ENCODE measurements at regions of chr16 and their contacts with region 1.

Region 1: GRCh38 chr16:970766-971581 is at the start of gene LMF1:
- DNase-seq: peak; percentile 100
- ATAC-seq: peak; percentile 99
- H3K4me3 Mint-ChIP-seq: peak within 1 kb of the TSS; percentile 85
- H3K27ac Mint-ChIP-seq: peak within 1 kb of the TSS; percentile 65
- H3K4me1 Mint-ChIP-seq: peaks cover 19% of the 10 kb centered on the region
- H3K27me3 Mint-ChIP-seq: peaks cover 8% of the 10 kb centered on the region
- CTCF ChIP-seq: no peak
- total RNA-seq, gene LMF1: 30.7 and 36.1 TPM in 2 replicates

Region 2: GRCh38 chr16:720990-721764 is 249.8 kb before region 1 on chr16 and contains the start of gene ANTKMT:
- CTCF ChIA-PET with region 1: no interaction called
- POLR2A ChIA-PET with region 1: no interaction called
- intact Hi-C with region 1: loop called (anchors 5 kb)
- DNase-seq: peak; percentile 89
- ATAC-seq: peak; percentile 90
- H3K4me3 Mint-ChIP-seq: peak within 1 kb of the TSS; percentile 80
- H3K27ac Mint-ChIP-seq: peak within 1 kb of the TSS; percentile 73
- H3K4me1 Mint-ChIP-seq: peaks cover 19% of the 10 kb centered on the region
- H3K27me3 Mint-ChIP-seq: peaks cover 3% of the 10 kb centered on the region
- CTCF ChIP-seq: no peak
- total RNA-seq, gene ANTKMT: 58.0 and 67.4 TPM in 2 replicates

Region 3: DNA sequence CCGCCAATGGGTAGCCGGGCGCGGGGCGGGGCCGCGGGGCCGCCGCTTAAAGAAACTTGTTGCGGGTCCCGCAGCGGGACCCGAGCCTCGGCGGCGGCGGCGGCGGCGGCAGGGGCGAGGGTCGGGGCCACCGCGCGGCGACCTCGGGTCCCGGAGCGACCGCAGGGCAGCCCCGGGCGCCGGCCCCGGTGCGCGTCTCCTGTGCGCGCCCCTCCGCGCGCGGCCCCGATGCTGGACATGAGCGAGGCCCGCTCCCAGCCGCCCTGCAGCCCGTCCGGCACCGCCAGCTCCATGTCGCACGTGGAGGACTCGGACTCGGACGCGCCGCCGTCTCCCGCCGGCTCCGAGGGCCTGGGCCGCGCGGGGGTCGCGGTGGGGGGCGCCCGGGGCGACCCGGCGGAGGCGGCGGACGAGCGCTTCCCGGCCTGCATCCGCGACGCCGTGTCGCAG is 10.7 kb after region 1 on chr16 and contains the start of gene SOX8:
- CTCF ChIA-PET with region 1: no interaction called
- POLR2A ChIA-PET with region 1: interaction called, 3 read pairs
- intact Hi-C with region 1: loop called (anchors 1 kb)
- DNase-seq: no peak
- ATAC-seq: no peak
- H3K4me3 Mint-ChIP-seq: peak within 1 kb of the TSS; percentile 79
- H3K27ac Mint-ChIP-seq: no peak within 1 kb of the TSS
- H3K4me1 Mint-ChIP-seq: peaks cover 2% of the 10 kb centered on the region
- H3K27me3 Mint-ChIP-seq: peaks cover 20% of the 10 kb centered on the region
- CTCF ChIP-seq: no peak
- total RNA-seq, gene SOX8: 0.18 and 0.27 TPM in 2 replicates